ENCODE measurements at regions of chr9 and their contacts with region 1.

Region 1: DNA sequence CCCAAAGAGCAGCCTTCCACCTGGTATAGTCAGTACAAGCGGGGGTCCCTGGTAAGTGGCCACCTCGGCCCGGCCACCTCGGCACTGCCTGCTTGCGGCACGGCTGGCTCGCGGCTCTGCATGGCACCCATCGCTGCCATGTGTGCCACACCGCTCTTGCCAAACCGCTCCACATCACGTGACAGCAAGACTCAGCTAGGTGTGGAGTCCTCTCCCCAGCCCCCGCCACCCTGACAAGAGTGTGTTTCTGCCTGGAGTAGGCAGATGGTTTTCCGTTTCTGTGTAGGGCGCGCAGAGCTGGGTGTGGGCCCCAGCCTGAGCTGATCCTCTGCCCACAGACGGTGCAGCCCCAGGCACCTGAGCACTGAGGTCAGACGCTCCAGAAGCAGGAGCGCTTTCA is 50.5 kb upstream of the FCN2 start:
- DNase-seq: no peak

Region 2: DNA sequence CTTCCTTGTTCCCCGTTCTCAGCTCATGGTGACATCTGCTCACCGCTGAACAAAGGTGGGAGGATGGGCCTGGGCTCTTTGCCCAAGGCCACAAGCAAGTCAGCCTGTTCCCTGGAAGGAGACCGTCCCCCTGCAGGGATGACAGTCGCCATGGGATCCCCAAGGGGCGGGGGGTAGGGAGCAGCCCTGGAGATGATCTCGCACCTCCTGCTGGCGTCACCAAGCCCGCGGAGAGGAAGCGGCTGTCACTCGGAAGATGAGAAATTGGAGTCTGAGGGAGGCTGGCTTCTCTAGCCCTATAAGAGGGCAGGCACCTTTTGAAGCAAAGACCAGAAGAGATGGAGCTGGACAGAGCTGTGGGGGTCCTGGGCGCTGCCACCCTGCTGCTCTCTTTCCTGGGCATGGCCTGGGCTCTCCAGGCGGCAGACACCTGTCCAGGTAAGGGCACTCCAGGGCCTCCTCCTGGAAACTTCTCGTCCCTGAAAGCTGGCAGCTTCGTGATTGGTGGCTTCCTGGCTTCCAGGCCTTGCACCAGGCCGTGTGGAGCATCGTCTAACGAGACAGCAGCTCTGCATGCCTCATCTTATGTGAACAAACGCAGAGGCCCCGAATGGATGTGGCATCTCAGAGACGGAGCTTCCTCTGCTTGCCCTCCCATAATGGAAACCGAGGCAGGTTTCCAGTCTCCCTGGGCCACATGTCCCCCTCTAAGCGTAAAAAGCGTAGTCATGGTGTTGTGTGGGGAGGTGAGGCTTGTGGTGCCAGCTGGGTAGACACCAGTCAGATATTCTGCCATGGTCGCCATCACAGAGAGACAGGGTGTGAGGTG is 50.6 kb after region 1 on chr9 and contains the start of gene FCN2:
- intact Hi-C with region 1: loop called (anchors 5 kb)
- DNase-seq: no peak
- total RNA-seq, gene FCN2: not detected

Measured in cardiac septum (tissue), 1 donor.